BJ (cell line): ENCODE measurements at regions of chr4 and their contacts with region 1.

Region 1: GRCh38 chr4:21765810-21766407 is 182.7 kb downstream of the KCNIP4 start:
- DNase-seq: no peak
- H3K4me3 ChIP-seq: no peak overlapping the region
- H3K27me3 ChIP-seq: peaks cover 8% of the 10 kb centered on the region
- CTCF ChIP-seq: peak; percentile 87

Region 2: DNA sequence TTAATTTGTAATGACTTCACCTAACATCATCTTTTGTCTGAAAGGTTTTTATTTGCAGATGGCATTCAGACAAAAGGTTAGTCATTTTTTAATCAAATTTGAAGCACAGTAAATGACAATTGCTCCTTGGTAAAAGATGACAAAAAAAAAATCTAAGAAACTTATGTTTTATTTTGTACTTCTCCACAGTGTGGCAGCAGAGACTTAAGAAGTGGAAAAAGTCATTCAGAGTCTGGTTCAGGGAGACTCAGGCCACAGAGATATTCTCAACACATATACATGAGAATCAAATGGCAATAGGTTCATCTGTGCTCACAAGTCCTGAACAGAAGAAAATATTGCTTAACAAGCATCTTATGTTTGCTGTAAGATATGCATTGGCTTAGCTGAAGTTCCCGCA is 253.6 kb before region 1 on chr4:
- CTCF ChIA-PET with region 1: interaction called, 181 read pairs
- POLR2A ChIA-PET with region 1: no interaction called
- DNase-seq: peak; percentile 2
- H3K4me3 ChIP-seq: no peak overlapping the region
- H3K27me3 ChIP-seq: peaks cover 1% of the 10 kb centered on the region; the same call in 1 of the 2 replicates
- CTCF ChIP-seq: peak; percentile 42

Region 3: GRCh38 chr4:21753084-21753760 is 12.7 kb before region 1 on chr4:
- CTCF ChIA-PET with region 1: interaction called, 24 read pairs
- POLR2A ChIA-PET with region 1: no interaction called
- DNase-seq: no peak
- H3K4me3 ChIP-seq: no peak overlapping the region
- H3K27me3 ChIP-seq: 0 out of 2 replicates have a peak, but pooled peaks cover 1% of the 10 kb centered on the region
- CTCF ChIP-seq: no peak